ENCODE measurements at regions of chr21 and their contacts with region 1.

Region 1: DNA sequence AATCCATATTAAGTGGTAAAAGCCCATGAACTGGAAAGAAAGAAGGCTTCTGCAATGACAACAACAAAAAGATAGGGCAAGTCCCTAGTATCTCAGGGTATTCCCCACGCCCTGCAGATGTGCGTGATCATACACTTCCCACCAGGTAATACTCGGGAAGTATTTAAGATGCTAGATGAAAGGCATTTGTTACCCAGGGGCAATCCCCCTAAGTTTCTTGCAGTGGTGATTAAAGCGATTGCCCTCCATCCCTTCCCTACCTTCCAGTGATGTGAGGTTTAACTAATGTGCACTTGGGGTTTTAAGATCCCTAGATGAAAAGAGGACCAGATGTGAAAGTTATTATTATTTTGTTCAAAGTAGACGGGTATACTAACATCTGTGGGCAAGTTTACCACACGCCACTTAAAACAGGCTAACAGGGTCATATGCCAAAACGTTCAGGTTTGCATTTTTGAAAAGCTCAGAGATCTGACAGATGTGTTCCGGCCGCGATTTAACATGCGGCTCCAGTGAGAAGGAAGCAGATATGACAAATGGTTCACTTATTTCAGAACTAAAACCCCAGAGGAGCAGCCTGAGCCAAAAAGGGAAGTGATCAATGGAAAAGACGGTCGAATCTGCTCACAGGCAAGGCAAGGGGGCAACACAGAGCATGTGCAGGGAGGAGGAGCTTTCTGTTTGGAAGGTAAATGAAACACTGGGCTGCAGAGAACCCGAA is 17.4 kb downstream of the TIAM1 start:
- DNase-seq: peak; percentile 25
- ATAC-seq: peak; percentile 94
- H3K4me3 Mint-ChIP-seq: peak overlapping the region; percentile 61
- H3K27ac Mint-ChIP-seq: peak overlapping the region; percentile 77
- H3K4me1 Mint-ChIP-seq: peaks cover 24% of the 10 kb centered on the region
- H3K27me3 Mint-ChIP-seq: no peaks in the 10 kb centered on the region
- CTCF ChIP-seq: no peak

Region 2: GRCh38 chr21:31509194-31510017 is 182.7 kb after region 1 on chr21:
- CTCF ChIA-PET with region 1: no interaction called
- POLR2A ChIA-PET with region 1: interaction called, 3 read pairs
- intact Hi-C with region 1: loop called (anchors 1 kb)
- DNase-seq: no peak
- ATAC-seq: peak; percentile 41
- H3K4me3 Mint-ChIP-seq: no peak overlapping the region
- H3K27ac Mint-ChIP-seq: no peak overlapping the region
- H3K4me1 Mint-ChIP-seq: peaks cover 37% of the 10 kb centered on the region
- H3K27me3 Mint-ChIP-seq: no peaks in the 10 kb centered on the region
- CTCF ChIP-seq: no peak

Region 3: GRCh38 chr21:31580866-31581276 is 254.2 kb after region 1 on chr21:
- CTCF ChIA-PET with region 1: no interaction called
- POLR2A ChIA-PET with region 1: no interaction called
- intact Hi-C with region 1: loop called (anchors 2 kb)
- DNase-seq: peak; percentile 42
- ATAC-seq: peak; percentile 85
- H3K4me3 Mint-ChIP-seq: no peak overlapping the region
- H3K27ac Mint-ChIP-seq: no peak overlapping the region
- H3K4me1 Mint-ChIP-seq: no peaks in the 10 kb centered on the region
- H3K27me3 Mint-ChIP-seq: peaks cover 8% of the 10 kb centered on the region
- CTCF ChIP-seq: no peak

Region 4: GRCh38 chr21:31772674-31773555 is 446.2 kb after region 1 on chr21:
- CTCF ChIA-PET with region 1: no interaction called
- POLR2A ChIA-PET with region 1: no interaction called
- intact Hi-C with region 1: loop called (anchors 2 kb)
- DNase-seq: peak; percentile 46
- ATAC-seq: peak; percentile 86
- H3K4me3 Mint-ChIP-seq: peak overlapping the region; percentile 76
- H3K27ac Mint-ChIP-seq: peak overlapping the region; percentile 98
- H3K4me1 Mint-ChIP-seq: peaks cover 61% of the 10 kb centered on the region
- H3K27me3 Mint-ChIP-seq: no peaks in the 10 kb centered on the region
- CTCF ChIP-seq: no peak

Measured in activated B cell treated with CpG ODN at 0.5 μM for 24 hours (primary cell).